Naive thymus-derived CD4-positive, alpha-beta T cell (primary cell): ENCODE measurements at regions of chr2 and their contacts with region 1.

Region 1: GRCh38 chr2:218979846-218980734 is 4.9 kb downstream of the FEV start:
- DNase-seq: peak; percentile 65 to 85 (median 81)
- ATAC-seq: peak; percentile 93
- H3K4me3 ChIP-seq: peak overlapping the region; percentile 53
- H3K4me3 Mint-ChIP-seq: peak overlapping the region; percentile 66 to 94 (median 73)
- H3K27ac ChIP-seq: no peak overlapping the region
- H3K27ac Mint-ChIP-seq: peak overlapping the region in 1 of 9 donors; percentile 58
- H3K4me1 ChIP-seq: peaks cover 13 to 23% of the 10 kb centered on the region in 2 donors
- H3K4me1 Mint-ChIP-seq: peaks cover 14 to 40% (median 20%) of the 10 kb centered on the region in 7 donors
- H3K27me3 ChIP-seq: peaks cover 17 to 35% of the 10 kb centered on the region in 2 donors
- H3K27me3 Mint-ChIP-seq: peaks cover 60 to 80% (median 70%) of the 10 kb centered on the region in 5 donors

Region 2: GRCh38 chr2:218839430-218839829 is 140.7 kb before region 1 on chr2:
- CTCF ChIA-PET with region 1: no interaction called
- POLR2A ChIA-PET with region 1: no interaction called
- intact Hi-C with region 1: no loop called
- DNase-seq: no peak
- ATAC-seq: no peak
- H3K4me3 ChIP-seq: no peak overlapping the region
- H3K4me3 Mint-ChIP-seq: no peak overlapping the region
- H3K27ac ChIP-seq: no peak overlapping the region
- H3K27ac Mint-ChIP-seq: no peak overlapping the region
- H3K4me1 ChIP-seq: no peaks in the 10 kb centered on the region
- H3K4me1 Mint-ChIP-seq: peaks cover 0 to 1% (median 0%) of the 10 kb centered on the region in 7 donors
- H3K27me3 ChIP-seq: no peaks in the 10 kb centered on the region
- H3K27me3 Mint-ChIP-seq: peaks cover 48 to 71% (median 54%) of the 10 kb centered on the region in 5 donors

Region 3: GRCh38 chr2:218962859-218963492 is 17.1 kb before region 1 on chr2:
- CTCF ChIA-PET with region 1: interaction called, 5 read pairs
- POLR2A ChIA-PET with region 1: no interaction called
- intact Hi-C with region 1: loop called in 1 of 2 experiments (anchors 2 kb)
- DNase-seq: peak in 7 of 9 donors; percentile 46 to 71 (median 57)
- ATAC-seq: no peak
- H3K4me3 ChIP-seq: no peak overlapping the region
- H3K4me3 Mint-ChIP-seq: peak overlapping the region in 1 of 10 donors; percentile 6
- H3K27ac ChIP-seq: no peak overlapping the region
- H3K27ac Mint-ChIP-seq: no peak overlapping the region
- H3K4me1 ChIP-seq: peaks cover 3 to 8% of the 10 kb centered on the region in 2 donors
- H3K4me1 Mint-ChIP-seq: peaks cover 6 to 26% (median 13%) of the 10 kb centered on the region in 7 donors
- H3K27me3 ChIP-seq: peaks cover 17 to 37% of the 10 kb centered on the region in 2 donors
- H3K27me3 Mint-ChIP-seq: peaks cover 65 to 74% (median 69%) of the 10 kb centered on the region in 5 donors

Region 4: GRCh38 chr2:218995972-218996711 is 16.1 kb after region 1 on chr2:
- CTCF ChIA-PET with region 1: interaction called, 7 read pairs
- POLR2A ChIA-PET with region 1: interaction called, 3 read pairs
- intact Hi-C with region 1: loop called (anchors 1 to 2 kb)
- DNase-seq: peak; percentile 38 to 85 (median 63)
- ATAC-seq: peak; percentile 90
- H3K4me3 ChIP-seq: no peak overlapping the region
- H3K4me3 Mint-ChIP-seq: peak overlapping the region in 6 of 10 donors; percentile 29 to 66 (median 45)
- H3K27ac ChIP-seq: no peak overlapping the region
- H3K27ac Mint-ChIP-seq: no peak overlapping the region
- H3K4me1 ChIP-seq: peaks cover 0 to 7% of the 10 kb centered on the region in 2 donors
- H3K4me1 Mint-ChIP-seq: peaks cover 0 to 15% (median 7%) of the 10 kb centered on the region in 7 donors
- H3K27me3 ChIP-seq: peaks cover 5 to 33% of the 10 kb centered on the region in 2 donors
- H3K27me3 Mint-ChIP-seq: peaks cover 57 to 88% (median 64%) of the 10 kb centered on the region in 5 donors

Region 5: GRCh38 chr2:219010162-219010756 is 30.2 kb after region 1 on chr2:
- CTCF ChIA-PET with region 1: no interaction called
- POLR2A ChIA-PET with region 1: no interaction called
- intact Hi-C with region 1: no loop called
- DNase-seq: no peak
- ATAC-seq: peak; percentile 45
- H3K4me3 ChIP-seq: no peak overlapping the region
- H3K4me3 Mint-ChIP-seq: no peak overlapping the region
- H3K27ac ChIP-seq: no peak overlapping the region
- H3K27ac Mint-ChIP-seq: no peak overlapping the region
- H3K4me1 ChIP-seq: no peaks in the 10 kb centered on the region
- H3K4me1 Mint-ChIP-seq: no peaks in the 10 kb centered on the region
- H3K27me3 ChIP-seq: no peaks in the 10 kb centered on the region
- H3K27me3 Mint-ChIP-seq: peaks cover 15 to 61% (median 43%) of the 10 kb centered on the region in 5 donors